BJ (cell line): ENCODE measurements at regions of chr13 and their contacts with region 1.

Region 1: GRCh38 chr13:114298866-114299265 is 15.4 kb upstream of the CHAMP1 start:
- DNase-seq: no peak
- H3K4me3 ChIP-seq: no peak overlapping the region
- H3K27me3 ChIP-seq: no peaks in the 10 kb centered on the region
- CTCF ChIP-seq: no peak

Region 2: GRCh38 chr13:113854238-113855011 is 444.4 kb before region 1 on chr13:
- CTCF ChIA-PET with region 1: no interaction called
- POLR2A ChIA-PET with region 1: no interaction called
- DNase-seq: no peak
- H3K4me3 ChIP-seq: no peak overlapping the region
- H3K27me3 ChIP-seq: no peaks in the 10 kb centered on the region
- CTCF ChIP-seq: no peak

Region 3: GRCh38 chr13:114319441-114319913 is 20.6 kb after region 1 on chr13:
- CTCF ChIA-PET with region 1: no interaction called
- POLR2A ChIA-PET with region 1: interaction called, 10 read pairs
- DNase-seq: peak; percentile 86
- H3K4me3 ChIP-seq: no peak overlapping the region
- H3K27me3 ChIP-seq: no peaks in the 10 kb centered on the region
- CTCF ChIP-seq: no peak